ENCODE measurements at regions of chr5 and their contacts with region 1.

Region 1: DNA sequence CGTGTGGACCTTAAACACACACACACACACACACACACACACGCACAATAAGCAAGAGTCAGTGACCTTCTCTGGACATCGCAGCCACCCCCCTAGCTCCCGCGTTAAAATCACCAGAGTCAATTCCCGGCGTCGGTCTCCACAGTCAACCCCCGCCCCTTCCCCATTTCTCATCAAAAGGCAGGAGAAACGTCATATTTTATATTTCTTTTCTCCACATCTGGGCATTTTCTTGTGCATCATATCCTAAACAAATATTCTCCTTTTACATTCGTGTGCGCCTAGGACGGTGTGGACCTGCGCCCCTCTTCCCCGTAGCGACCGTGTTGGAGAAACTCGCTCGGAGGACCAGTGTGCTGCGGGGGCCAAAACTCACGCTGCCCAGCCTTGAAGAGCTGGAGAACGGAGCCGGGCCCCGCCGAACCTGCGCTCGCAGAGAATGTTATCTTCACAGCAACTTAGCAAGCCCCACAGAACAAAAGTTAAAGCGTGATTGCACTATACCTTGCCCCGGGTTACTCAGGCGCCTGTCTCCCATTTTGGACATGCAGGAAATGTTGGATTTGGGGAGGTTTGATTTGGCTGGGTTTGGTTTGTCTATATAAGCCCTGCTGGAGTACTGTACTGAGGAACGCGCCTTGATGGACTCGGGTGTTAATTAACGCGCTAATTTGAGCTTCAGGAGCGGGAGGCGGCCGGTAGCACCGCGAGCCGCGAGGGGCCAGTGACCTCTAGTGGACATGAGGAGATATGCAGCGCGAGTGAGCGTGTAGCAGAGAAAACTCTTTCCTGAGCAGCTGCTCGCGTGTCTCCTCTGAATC is 192.4 kb downstream of the MEF2C start:
- DNase-seq: no peak
- H3K4me3 ChIP-seq: peak overlapping the region; percentile 44
- CTCF ChIP-seq: peak; percentile 98

Region 2: DNA sequence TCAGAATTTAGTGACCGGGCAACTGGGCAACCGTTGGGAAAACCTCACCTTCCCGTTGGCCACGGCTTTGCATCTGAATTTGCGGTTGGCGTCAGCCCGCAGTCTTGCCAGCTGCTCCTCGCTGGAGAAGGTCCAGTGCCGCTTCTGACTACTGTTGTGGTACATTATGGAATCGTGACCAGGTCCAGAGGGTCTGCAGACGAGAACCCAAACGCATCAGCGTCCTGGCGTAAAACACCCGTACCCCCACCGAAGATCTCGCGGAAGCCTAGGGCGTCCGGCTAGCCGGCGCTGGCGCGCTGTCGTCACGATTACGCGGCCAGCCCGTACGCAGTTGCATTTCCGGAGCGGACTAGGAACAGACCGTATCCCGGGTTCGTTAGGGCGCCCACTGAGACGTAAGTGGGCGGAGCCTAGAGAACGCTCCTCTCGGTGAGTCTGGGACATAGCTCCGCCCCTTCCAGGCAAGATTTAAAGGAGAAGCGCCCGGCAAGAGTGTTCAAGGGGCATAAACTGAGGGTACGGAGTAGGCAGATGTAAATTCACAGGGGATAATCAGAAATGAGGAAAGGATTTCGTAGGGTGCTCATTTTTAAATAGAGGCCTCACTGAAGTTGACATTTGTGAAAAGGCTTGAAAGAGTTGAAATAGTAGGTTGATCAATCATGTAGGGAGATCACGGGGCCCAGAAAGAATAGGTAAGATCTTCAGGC is 1277.8 kb before region 1 on chr5 and contains the start of gene CCNH:
- in situ Hi-C with region 1: loop called (anchors 25 kb)
- DNase-seq: peak; percentile 98
- H3K4me3 ChIP-seq: peak within 1 kb of the TSS; percentile 95
- CTCF ChIP-seq: no peak

Measured in astrocyte of the cerebellum (primary cell).